Right cardiac atrium (tissue), 5 donors: ENCODE measurements at regions of chr18 and their contacts with region 1.

Region 1: GRCh38 chr18:47490882-47491281 is 239.4 kb upstream of the SKOR2 start:
- DNase-seq: no peak
- ATAC-seq: peak; percentile 73 to 79
- H3K4me3 ChIP-seq: no peak overlapping the region
- H3K27ac ChIP-seq: no peak overlapping the region
- H3K4me1 ChIP-seq: peaks cover 2% of the 10 kb centered on the region
- H3K27me3 ChIP-seq: no peaks in the 10 kb centered on the region

Region 2: DNA sequence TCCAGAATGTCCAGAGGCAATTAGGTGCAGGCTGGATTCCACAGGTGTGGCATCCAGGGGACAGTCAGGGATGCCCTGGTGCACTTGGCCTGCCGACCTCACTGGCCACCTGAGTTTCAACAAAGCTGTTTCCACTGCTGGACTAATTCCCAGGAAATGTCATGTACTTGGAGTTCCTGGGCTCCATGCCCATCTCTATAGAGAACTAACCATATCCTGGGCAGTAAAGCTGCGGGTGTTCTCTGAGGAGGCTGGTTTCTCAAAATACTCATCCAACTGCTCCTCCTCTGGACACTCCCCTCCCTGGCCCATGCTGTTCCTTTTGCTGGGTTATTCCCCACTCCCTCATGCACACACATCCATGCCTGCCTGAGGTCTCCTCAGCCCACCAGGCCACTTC is 77.6 kb before region 1 on chr18:
- intact Hi-C with region 1: no loop called
- DNase-seq: no peak
- ATAC-seq: peak in 1 of 2 donors; percentile 25
- H3K4me3 ChIP-seq: no peak overlapping the region
- H3K27ac ChIP-seq: no peak overlapping the region
- H3K4me1 ChIP-seq: no peaks in the 10 kb centered on the region
- H3K27me3 ChIP-seq: no peaks in the 10 kb centered on the region

Region 3: DNA sequence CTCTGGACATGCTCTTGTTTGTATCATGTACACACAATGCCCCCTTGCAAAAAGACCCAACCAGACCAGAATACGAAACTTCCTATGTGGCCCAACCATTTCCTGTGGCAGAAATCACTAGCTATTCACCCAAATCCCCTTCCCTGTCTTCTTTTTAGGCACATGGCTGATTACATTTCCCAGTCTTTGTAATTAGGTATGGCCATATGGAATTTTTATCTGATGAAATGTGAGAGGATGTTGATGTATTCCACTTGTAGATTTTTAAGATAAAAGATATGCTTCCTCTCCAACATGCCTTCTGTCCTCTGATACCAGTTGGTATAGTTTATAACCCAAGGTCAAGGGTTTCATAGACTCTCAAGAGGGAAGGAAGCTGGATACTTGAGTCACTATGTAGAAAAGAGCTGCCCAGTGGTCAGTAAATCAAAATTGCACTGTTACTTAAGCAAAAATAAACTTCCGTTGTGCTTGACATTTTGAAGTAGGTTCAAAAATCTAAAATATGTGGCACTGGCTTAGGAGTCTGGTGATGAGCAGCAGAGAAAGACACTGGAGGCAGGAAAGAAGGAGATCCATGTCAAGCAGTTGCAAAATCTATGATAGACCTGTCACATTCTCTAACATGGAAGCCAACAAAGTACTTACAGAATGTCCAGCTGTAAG is 142.2 kb after region 1 on chr18:
- intact Hi-C with region 1: loop called in 1 of 4 experiments (anchors 10 kb)
- DNase-seq: no peak
- ATAC-seq: peak; percentile 18 to 65
- H3K4me3 ChIP-seq: no peak overlapping the region
- H3K27ac ChIP-seq: no peak overlapping the region
- H3K4me1 ChIP-seq: peaks cover 4% of the 10 kb centered on the region
- H3K27me3 ChIP-seq: no peaks in the 10 kb centered on the region

Region 4: DNA sequence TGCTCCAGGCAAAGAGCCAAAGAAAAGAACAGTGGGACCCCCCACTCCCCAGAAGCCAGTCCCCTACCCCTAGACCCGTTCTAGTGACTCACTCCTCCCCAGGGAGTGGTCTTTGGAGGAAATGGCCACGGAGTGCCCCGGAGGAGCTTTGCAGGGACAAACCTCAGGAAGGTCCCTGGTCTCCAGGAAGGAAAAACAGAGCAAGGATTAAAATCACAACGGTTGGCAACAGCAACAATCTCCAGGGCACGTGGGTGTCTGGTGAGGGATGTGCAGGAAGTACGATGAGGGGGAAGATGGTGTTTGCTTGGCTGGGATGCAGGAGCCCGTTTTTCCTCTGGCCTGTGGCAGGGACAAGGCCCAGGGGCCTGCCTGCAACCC is 304.5 kb after region 1 on chr18:
- intact Hi-C with region 1: no loop called
- DNase-seq: peak in 1 of 3 donors; percentile 28
- ATAC-seq: peak; percentile 49 to 77
- H3K4me3 ChIP-seq: no peak overlapping the region
- H3K27ac ChIP-seq: no peak overlapping the region
- H3K4me1 ChIP-seq: peaks cover 2% of the 10 kb centered on the region
- H3K27me3 ChIP-seq: no peaks in the 10 kb centered on the region

Region 5: GRCh38 chr18:47858607-47859006 is 367.7 kb after region 1 on chr18:
- intact Hi-C with region 1: no loop called
- DNase-seq: no peak
- ATAC-seq: no peak
- H3K4me3 ChIP-seq: no peak overlapping the region
- H3K27ac ChIP-seq: no peak overlapping the region
- H3K4me1 ChIP-seq: no peaks in the 10 kb centered on the region
- H3K27me3 ChIP-seq: no peaks in the 10 kb centered on the region